Adrenal gland (tissue), 19 donors: ENCODE measurements at regions of chr4 and their contacts with region 1.

Region 1: DNA sequence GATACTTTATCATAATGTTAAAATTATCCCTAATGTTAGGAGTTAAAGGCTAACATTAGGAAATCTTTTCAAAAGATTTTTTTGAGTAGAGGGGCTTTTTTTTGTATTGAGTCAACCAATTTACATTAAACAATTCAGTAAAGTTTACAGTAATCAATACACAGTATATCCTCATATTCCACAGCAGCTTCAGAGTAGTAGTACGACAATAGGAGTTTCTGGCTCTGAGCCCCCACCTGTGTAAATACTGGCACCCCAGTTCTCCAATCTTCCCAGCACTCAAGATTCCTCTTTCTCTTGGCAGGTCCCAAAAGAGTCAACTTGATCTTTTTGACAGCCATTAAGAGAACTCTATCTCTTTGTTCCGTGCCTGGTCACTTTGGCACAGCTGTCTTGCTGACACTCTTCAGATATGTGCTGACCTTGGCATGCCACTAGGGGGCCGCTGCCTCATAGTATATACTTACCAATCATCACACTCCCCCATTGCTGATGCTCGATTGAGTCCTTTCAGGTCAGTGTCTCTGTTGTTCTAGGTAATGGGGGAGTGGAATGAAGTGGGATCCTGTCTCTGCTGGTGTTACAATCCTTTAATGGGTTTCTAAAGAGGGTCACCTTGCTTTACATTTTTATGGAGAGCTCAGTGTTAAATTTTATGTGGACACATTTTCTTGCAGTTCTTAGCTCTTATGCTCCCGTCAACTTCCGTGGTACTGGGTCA is 19.5 kb upstream of the CCNI start:
- DNase-seq: peak; percentile 64 to 93 (median 83)
- H3K4me3 ChIP-seq: no peak overlapping the region
- H3K27ac ChIP-seq: no peak overlapping the region
- H3K4me1 ChIP-seq: no peaks in the 10 kb centered on the region
- H3K27me3 ChIP-seq: no peaks in the 10 kb centered on the region
- CTCF ChIP-seq: peak; percentile 60 to 82 (median 74)
- POLR2A ChIP-seq: peak in 1 of 2 donors; percentile 6

Region 2: GRCh38 chr4:77156533-77156911 is 61.3 kb after region 1 on chr4:
- intact Hi-C with region 1: loop called in 1 of 2 experiments (anchors 10 kb)
- DNase-seq: peak; percentile 97 to 99 (median 98)
- H3K4me3 ChIP-seq: peak overlapping the region; percentile 12 to 83 (median 67)
- H3K27ac ChIP-seq: peak overlapping the region; percentile 67 to 95 (median 86)
- H3K4me1 ChIP-seq: peaks cover 7 to 28% of the 10 kb centered on the region in 2 donors
- H3K27me3 ChIP-seq: no peaks in the 10 kb centered on the region
- CTCF ChIP-seq: no peak
- POLR2A ChIP-seq: peak in 1 of 2 donors; percentile 79

Region 3: GRCh38 chr4:77203380-77204197 is 108.3 kb after region 1 on chr4:
- intact Hi-C with region 1: loop called in 1 of 2 experiments (anchors 10 kb)
- DNase-seq: peak; percentile 63 to 82 (median 68)
- H3K4me3 ChIP-seq: no peak overlapping the region
- H3K27ac ChIP-seq: no peak overlapping the region
- H3K4me1 ChIP-seq: no peaks in the 10 kb centered on the region
- H3K27me3 ChIP-seq: no peaks in the 10 kb centered on the region
- CTCF ChIP-seq: peak; percentile 49 to 81 (median 75)
- POLR2A ChIP-seq: no peak